Heart left ventricle (tissue), 16 donors: ENCODE measurements at regions of chr10 and their contacts with region 1.

Region 1: GRCh38 chr10:36872702-36873393 is 252.6 kb upstream of the ANKRD30A start:
- DNase-seq: no peak
- ATAC-seq: no peak
- H3K4me3 ChIP-seq: no peak overlapping the region
- H3K27ac ChIP-seq: no peak overlapping the region
- H3K4me1 ChIP-seq: peaks cover 0 to 2% (median 0%) of the 10 kb centered on the region in 12 donors
- H3K27me3 ChIP-seq: no peaks in the 10 kb centered on the region
- CTCF ChIP-seq: no peak
- POLR2A ChIP-seq: no peak

Region 2: GRCh38 chr10:36564433-36564832 is 308.4 kb before region 1 on chr10:
- intact Hi-C with region 1: no loop called
- DNase-seq: no peak
- ATAC-seq: no peak
- H3K4me3 ChIP-seq: no peak overlapping the region
- H3K27ac ChIP-seq: no peak overlapping the region
- H3K4me1 ChIP-seq: no peaks in the 10 kb centered on the region
- H3K27me3 ChIP-seq: no peaks in the 10 kb centered on the region
- CTCF ChIP-seq: no peak
- POLR2A ChIP-seq: no peak

Region 3: GRCh38 chr10:36789974-36790373 is 82.9 kb before region 1 on chr10:
- intact Hi-C with region 1: loop called in 1 of 10 experiments (anchors 10 kb)
- DNase-seq: no peak
- ATAC-seq: no peak
- H3K4me3 ChIP-seq: no peak overlapping the region
- H3K27ac ChIP-seq: no peak overlapping the region
- H3K4me1 ChIP-seq: peaks cover 0 to 6% (median 0%) of the 10 kb centered on the region in 12 donors
- H3K27me3 ChIP-seq: no peaks in the 10 kb centered on the region
- CTCF ChIP-seq: no peak
- POLR2A ChIP-seq: no peak